PC-3 (cell line): ENCODE measurements at regions of chr7 and their contacts with region 1.

Region 1: DNA sequence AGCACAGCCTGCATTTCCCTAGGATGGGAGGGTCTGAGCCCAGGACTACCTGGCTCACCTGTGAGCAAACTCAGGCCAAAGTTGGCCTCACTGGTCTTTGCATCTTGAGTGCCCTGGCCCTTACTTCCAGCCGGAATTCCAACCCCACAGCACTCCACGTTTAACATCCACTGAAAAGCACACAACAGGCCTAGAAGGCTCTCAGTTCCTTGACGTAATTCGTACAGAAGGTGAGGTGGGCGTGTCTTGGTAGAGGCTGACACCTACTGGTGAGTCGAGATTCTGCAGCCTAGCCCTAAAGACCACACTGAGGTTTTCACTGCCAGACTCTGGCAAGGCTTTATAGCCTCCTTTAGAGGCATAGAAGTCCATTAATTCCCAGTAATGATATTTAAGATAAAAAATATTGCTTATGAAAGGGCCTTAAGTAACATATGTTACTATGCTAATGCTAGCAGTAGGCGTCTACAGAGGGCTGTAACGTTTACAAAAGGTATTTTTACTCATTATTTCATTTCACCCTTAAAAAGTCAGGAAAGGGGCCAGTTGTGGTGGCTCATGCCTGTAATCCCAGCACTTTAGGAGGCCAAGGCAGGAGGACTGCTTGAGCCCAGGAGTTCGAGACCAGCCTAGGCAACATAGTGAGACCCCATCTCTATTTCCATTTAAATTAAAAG is 95.8 kb downstream of the HIP1 start:
- DNase-seq: peak; percentile 85
- ATAC-seq: peak; percentile 48
- H3K4me3 ChIP-seq: no peak overlapping the region
- H3K27ac ChIP-seq: no peak overlapping the region
- H3K4me1 ChIP-seq: peaks cover 5% of the 10 kb centered on the region
- H3K27me3 ChIP-seq: no peaks in the 10 kb centered on the region
- CTCF ChIP-seq: peak; percentile 90

Region 2: DNA sequence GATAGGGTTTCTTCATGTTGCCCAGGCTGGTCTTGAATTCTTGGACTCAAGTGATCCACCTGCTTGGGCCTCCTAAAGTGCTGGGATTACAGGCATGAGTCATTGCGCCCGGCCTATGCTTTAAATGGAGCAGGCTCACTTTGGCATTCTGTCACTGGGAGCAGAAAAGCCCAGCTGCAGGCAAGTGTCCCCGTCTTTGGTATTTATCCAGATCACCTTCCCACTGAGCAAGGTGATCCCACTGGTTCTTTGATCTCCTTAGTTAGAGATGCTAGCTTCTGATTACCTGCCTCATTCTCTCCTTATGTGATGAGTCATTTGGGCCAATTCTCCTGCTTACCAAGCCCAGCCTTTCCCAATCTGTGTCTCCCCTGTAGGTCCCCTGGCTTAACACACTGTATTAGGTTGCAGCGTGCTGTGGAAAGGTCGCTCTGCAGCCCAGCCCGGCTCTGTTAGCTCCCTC is 111.6 kb before region 1 on chr7:
- CTCF ChIA-PET with region 1: no interaction called
- POLR2A ChIA-PET with region 1: interaction called, 3 read pairs
- intact Hi-C with region 1: loop called (anchors 2 kb)
- DNase-seq: peak; percentile 32
- ATAC-seq: no peak
- H3K4me3 ChIP-seq: no peak overlapping the region
- H3K27ac ChIP-seq: no peak overlapping the region
- H3K4me1 ChIP-seq: peaks cover 10% of the 10 kb centered on the region
- H3K27me3 ChIP-seq: no peaks in the 10 kb centered on the region
- CTCF ChIP-seq: no peak

Region 3: GRCh38 chr7:75565132-75565837 is 77.7 kb before region 1 on chr7:
- CTCF ChIA-PET with region 1: no interaction called
- POLR2A ChIA-PET with region 1: interaction called, 10 read pairs
- intact Hi-C with region 1: no loop called
- DNase-seq: peak; percentile 96
- ATAC-seq: peak; percentile 89
- H3K4me3 ChIP-seq: peak overlapping the region; percentile 9; the same call in 1 of the 2 replicates
- H3K27ac ChIP-seq: peak overlapping the region; percentile 42
- H3K4me1 ChIP-seq: peaks cover 12% of the 10 kb centered on the region
- H3K27me3 ChIP-seq: no peaks in the 10 kb centered on the region
- CTCF ChIP-seq: no peak

Region 4: DNA sequence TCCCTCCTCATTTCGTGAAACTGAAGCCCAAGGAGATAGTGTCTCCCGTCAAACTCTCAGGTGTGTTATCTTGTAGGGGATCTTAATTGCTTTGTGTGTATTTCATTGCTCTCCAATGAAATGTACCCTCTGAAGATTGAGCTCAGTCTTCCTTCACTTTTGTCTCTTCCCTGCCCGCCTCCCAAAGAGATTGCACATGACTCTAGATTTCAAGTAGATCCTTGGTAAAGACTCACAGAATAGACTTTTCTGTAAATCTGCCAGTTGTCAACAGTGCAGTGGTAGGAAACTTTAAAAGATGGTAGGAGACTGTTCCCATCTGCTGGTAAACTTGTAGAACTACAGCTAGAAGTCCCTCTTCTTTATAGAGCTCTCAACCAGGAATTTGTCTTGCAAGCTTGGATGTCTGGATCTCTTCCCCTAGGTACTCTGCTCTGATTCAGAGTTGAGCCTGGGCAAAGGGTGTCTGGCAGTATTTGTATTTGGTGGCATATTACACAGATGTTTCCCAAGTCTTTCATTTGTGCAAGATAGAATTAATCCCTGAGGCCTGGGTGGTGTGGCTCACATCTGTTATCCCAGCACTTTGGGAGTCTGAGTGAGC is 119.5 kb after region 1 on chr7:
- CTCF ChIA-PET with region 1: no interaction called
- POLR2A ChIA-PET with region 1: no interaction called
- intact Hi-C with region 1: loop called (anchors 5 kb)
- DNase-seq: peak; percentile 74
- ATAC-seq: peak; percentile 96
- H3K4me3 ChIP-seq: no peak overlapping the region
- H3K27ac ChIP-seq: no peak overlapping the region
- H3K4me1 ChIP-seq: no peaks in the 10 kb centered on the region; the same call in 1 of the 2 replicates
- H3K27me3 ChIP-seq: no peaks in the 10 kb centered on the region
- CTCF ChIP-seq: peak; percentile 72